B cell (primary cell): ENCODE measurements at regions of chr7 and their contacts with region 1.

Region 1: DNA sequence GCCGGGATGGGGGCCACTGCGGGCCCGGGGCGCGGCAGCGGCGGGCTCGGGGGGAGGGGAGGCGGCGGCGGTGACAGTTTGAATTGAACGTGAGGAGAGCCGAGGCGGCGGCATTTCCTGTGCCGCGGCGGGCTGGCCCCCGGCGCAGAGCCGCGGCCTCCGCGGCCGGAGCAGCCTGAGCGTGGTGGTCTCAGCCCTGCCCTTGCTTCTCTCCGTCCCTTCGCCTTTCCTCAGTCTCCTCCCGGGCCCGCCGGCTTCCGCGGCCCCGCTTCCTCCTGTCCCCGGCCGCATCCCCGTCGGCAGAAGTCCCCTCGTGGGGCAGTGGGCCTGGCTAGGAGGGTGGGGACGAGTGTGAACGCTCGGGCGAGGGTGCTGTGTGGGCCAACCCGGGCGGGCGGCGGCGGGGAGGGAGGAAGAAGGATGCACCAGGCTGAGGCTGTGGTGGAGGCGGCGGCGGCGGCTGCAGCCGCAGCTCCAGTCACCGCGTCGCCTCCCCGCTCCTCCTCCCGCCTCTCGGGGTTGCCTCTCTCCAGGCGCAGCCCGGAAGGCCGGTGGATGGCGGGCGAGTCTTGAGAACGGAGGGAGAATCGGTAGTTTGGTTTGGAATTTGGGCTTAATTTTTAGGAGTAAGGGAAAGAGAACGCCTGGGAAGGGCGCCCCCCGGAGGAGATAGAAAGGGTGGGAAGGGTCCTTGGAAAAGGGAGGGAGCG is 690 bp downstream of the SEPTIN7 start:
- DNase-seq: peak; percentile 90
- ATAC-seq: peak; percentile 24
- H3K4me3 ChIP-seq: peak overlapping the region; percentile 75 to 91 (median 80)
- H3K4me3 Mint-ChIP-seq: peak overlapping the region; percentile 92
- H3K27ac ChIP-seq: peak overlapping the region; percentile 97 to 99
- H3K27ac Mint-ChIP-seq: peak overlapping the region; percentile 100
- H3K4me1 ChIP-seq: peaks cover 21 to 44% of the 10 kb centered on the region in 2 donors
- H3K4me1 Mint-ChIP-seq: peaks cover 55% of the 10 kb centered on the region
- H3K27me3 ChIP-seq: no peaks in the 10 kb centered on the region
- H3K27me3 Mint-ChIP-seq: no peaks in the 10 kb centered on the region
- CTCF ChIP-seq: peak; percentile 28

Region 2: GRCh38 chr7:35450456-35451214 is 350.9 kb before region 1 on chr7:
- CTCF ChIA-PET with region 1: no interaction called
- POLR2A ChIA-PET with region 1: no interaction called
- intact Hi-C with region 1: no loop called
- DNase-seq: no peak
- ATAC-seq: no peak
- H3K4me3 ChIP-seq: no peak overlapping the region
- H3K4me3 Mint-ChIP-seq: no peak overlapping the region
- H3K27ac ChIP-seq: no peak overlapping the region
- H3K27ac Mint-ChIP-seq: no peak overlapping the region
- H3K4me1 ChIP-seq: peaks cover 0 to 3% of the 10 kb centered on the region in 2 donors
- H3K4me1 Mint-ChIP-seq: no peaks in the 10 kb centered on the region
- H3K27me3 ChIP-seq: peaks cover 0 to 23% (median 11%) of the 10 kb centered on the region in 4 experiments
- H3K27me3 Mint-ChIP-seq: peaks cover 47% of the 10 kb centered on the region
- CTCF ChIP-seq: no peak

Region 3: DNA sequence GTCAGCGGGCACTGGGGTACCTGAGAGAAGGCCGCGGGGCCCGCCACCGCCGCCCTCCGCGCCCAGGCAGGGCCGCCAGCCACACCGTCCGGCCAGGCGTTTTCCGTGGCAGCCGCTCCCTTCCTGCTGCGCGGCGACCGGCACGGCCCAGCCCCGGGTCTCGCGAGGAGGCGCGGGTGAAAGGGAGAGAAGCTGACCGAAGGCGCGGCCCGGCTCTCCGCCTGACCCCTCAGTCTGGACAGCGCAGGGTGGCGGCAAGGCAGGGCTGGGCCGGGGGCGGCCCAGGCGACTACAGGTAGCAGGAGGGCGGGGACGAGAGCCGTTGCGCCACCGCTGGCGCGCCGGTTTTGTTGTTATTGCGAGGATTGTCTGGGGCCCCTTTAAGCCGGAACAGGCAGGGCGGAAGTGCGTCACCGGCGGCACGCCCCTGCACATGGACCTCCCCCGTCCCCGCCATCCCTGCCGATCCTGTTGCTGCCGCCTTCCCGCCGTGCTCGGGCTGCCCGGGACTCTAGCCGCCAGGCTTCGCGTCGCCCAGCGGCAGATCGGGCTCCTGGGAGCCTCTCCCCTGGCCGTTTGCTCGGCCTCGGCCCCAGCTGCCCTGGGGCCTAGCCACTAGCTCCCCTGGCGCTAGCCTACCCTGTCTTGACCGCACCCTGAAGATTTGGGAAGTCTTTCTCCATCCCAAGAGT is 106.6 kb before region 1 on chr7 and contains the start of gene HERPUD2:
- CTCF ChIA-PET with region 1: interaction called, 11 read pairs
- POLR2A ChIA-PET with region 1: interaction called, 30 read pairs
- intact Hi-C with region 1: loop called (anchors 1 kb)
- DNase-seq: peak; percentile 94
- ATAC-seq: peak; percentile 91
- H3K4me3 ChIP-seq: peak within 1 kb of the TSS; percentile 78 to 98 (median 94)
- H3K4me3 Mint-ChIP-seq: peak within 1 kb of the TSS; percentile 98
- H3K27ac ChIP-seq: peak within 1 kb of the TSS; percentile 82 to 98
- H3K27ac Mint-ChIP-seq: peak within 1 kb of the TSS; percentile 97
- H3K4me1 ChIP-seq: peaks cover 40 to 44% of the 10 kb centered on the region in 2 donors
- H3K4me1 Mint-ChIP-seq: peaks cover 57% of the 10 kb centered on the region
- H3K27me3 ChIP-seq: no peaks in the 10 kb centered on the region
- H3K27me3 Mint-ChIP-seq: no peaks in the 10 kb centered on the region
- CTCF ChIP-seq: no peak
- total RNA-seq, gene HERPUD2: 54.6 and 58.8 TPM in 2 replicates

Region 4: DNA sequence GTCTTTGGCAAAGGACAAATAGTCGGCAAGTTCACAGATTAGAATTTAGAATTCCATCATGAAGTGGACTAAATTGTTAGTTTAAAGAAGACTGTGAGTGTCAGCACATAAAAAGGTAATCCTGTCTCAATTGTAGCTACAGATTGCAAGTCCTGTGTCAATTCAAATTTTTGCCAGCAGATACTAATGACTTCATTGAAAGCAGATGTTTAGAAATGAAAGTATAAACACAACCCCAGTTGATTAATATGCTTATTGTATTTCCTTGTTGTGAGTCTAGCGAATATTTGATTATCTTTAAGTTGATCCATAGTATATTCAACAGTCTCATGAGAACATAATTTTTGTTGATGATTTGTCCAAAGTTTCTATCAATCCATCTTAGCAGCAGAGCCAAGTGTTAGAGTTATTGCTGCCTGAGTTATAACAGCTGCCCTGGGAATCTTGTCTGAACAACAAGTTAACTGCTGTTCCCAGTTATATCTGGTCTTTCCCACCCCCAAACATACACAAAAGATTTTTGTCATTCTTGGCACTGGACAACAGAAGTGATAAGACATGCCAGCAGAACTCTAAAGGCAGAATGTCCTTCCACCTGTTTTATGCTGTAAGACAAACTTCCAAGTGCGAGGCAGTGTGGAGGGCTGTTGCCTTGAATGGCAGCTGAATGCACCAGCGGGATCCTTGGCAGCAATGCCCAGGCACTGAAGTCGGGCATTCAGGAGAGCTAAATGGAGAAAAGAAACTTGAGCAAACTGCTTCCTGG is 85.3 kb before region 1 on chr7:
- CTCF ChIA-PET with region 1: interaction called, 96 read pairs
- POLR2A ChIA-PET with region 1: interaction called, 3 read pairs
- intact Hi-C with region 1: no loop called
- DNase-seq: no peak
- ATAC-seq: no peak
- H3K4me3 ChIP-seq: no peak overlapping the region
- H3K4me3 Mint-ChIP-seq: no peak overlapping the region
- H3K27ac ChIP-seq: no peak overlapping the region
- H3K27ac Mint-ChIP-seq: peak overlapping the region; percentile 16
- H3K4me1 ChIP-seq: peaks cover 13 to 16% of the 10 kb centered on the region in 2 donors
- H3K4me1 Mint-ChIP-seq: peaks cover 27% of the 10 kb centered on the region
- H3K27me3 ChIP-seq: no peaks in the 10 kb centered on the region
- H3K27me3 Mint-ChIP-seq: no peaks in the 10 kb centered on the region
- CTCF ChIP-seq: no peak

Region 5: DNA sequence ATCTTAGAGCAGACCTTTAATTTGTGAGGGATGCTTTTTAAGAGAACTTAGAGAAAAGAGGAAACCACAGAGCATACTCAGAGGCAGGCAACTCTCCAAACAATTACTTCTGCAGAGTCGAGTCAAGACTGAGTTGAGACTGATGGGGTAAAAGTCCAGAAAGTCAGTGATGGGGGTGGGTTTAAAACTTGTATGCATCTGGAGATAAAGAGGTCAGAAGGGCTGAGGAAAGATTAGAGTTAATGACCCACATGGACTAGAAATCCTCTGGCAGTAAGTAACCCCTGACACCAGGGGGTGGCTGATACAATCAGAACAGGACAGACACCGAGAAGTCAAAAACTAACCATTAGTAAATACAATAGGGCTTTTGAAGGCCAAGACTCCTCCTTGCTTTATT is 43.1 kb before region 1 on chr7:
- CTCF ChIA-PET with region 1: no interaction called
- POLR2A ChIA-PET with region 1: no interaction called
- intact Hi-C with region 1: loop called (anchors 5 kb)
- DNase-seq: peak; percentile 30
- ATAC-seq: no peak
- H3K4me3 ChIP-seq: no peak overlapping the region
- H3K4me3 Mint-ChIP-seq: no peak overlapping the region
- H3K27ac ChIP-seq: no peak overlapping the region
- H3K27ac Mint-ChIP-seq: no peak overlapping the region
- H3K4me1 ChIP-seq: peaks cover 0 to 3% of the 10 kb centered on the region in 2 donors
- H3K4me1 Mint-ChIP-seq: peaks cover 7% of the 10 kb centered on the region
- H3K27me3 ChIP-seq: no peaks in the 10 kb centered on the region
- H3K27me3 Mint-ChIP-seq: no peaks in the 10 kb centered on the region
- CTCF ChIP-seq: no peak

Region 6: GRCh38 chr7:35780070-35780469 is 21.5 kb before region 1 on chr7:
- CTCF ChIA-PET with region 1: no interaction called
- POLR2A ChIA-PET with region 1: no interaction called
- intact Hi-C with region 1: no loop called
- DNase-seq: no peak
- ATAC-seq: no peak
- H3K4me3 ChIP-seq: no peak overlapping the region
- H3K4me3 Mint-ChIP-seq: no peak overlapping the region
- H3K27ac ChIP-seq: no peak overlapping the region
- H3K27ac Mint-ChIP-seq: no peak overlapping the region
- H3K4me1 ChIP-seq: no peaks in the 10 kb centered on the region
- H3K4me1 Mint-ChIP-seq: peaks cover 5% of the 10 kb centered on the region
- H3K27me3 ChIP-seq: no peaks in the 10 kb centered on the region
- H3K27me3 Mint-ChIP-seq: no peaks in the 10 kb centered on the region
- CTCF ChIP-seq: no peak

Region 7: GRCh38 chr7:35854311-35854710 is 52.8 kb after region 1 on chr7:
- CTCF ChIA-PET with region 1: interaction called, 3 read pairs
- POLR2A ChIA-PET with region 1: interaction called, 3 read pairs
- intact Hi-C with region 1: loop called (anchors 10 kb)
- DNase-seq: no peak
- ATAC-seq: no peak
- H3K4me3 ChIP-seq: no peak overlapping the region
- H3K4me3 Mint-ChIP-seq: no peak overlapping the region
- H3K27ac ChIP-seq: no peak overlapping the region
- H3K27ac Mint-ChIP-seq: no peak overlapping the region
- H3K4me1 ChIP-seq: no peaks in the 10 kb centered on the region
- H3K4me1 Mint-ChIP-seq: peaks cover 60% of the 10 kb centered on the region
- H3K27me3 ChIP-seq: no peaks in the 10 kb centered on the region
- H3K27me3 Mint-ChIP-seq: no peaks in the 10 kb centered on the region
- CTCF ChIP-seq: no peak

Region 8: DNA sequence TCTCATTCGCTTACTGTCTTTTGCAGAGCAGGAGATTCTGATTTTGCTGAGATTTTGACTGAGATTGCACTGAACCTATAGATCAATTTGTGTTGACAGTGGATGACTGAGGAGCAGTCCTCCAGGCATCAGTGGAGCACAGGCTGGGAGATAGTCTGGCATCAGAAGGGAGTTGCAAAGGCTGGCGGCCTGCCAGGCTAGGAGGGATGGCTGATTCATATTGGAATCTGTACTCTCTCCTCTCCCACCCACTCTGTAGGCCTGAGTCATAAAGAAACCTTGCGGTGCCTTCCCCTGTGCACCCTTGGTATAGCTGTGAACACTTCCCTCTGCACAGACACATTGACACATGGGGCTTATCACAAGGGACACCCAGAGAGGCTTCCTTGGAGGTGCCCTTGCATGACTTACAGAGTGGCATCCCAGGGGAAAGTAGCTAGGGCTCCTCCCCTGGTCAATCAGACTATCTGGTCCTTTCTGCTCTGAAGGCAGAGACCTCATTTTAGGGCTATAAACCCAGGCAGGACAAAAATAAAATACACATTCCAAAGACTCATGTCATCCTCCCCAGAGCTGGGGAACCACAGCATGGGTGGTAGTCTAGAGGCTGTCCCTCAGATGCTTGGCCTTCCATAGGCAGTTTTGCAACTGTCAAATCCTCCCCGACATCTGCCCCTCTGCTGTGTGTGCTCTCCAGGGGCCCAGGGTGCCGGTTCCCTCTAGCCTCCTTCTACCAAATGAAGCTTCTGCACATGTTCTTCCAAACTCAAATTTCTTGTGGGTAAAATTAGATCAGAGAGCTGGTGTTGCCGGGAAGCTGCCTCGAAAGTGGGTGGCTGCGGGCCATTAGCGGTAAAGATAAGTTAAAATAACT is 314.1 kb after region 1 on chr7:
- CTCF ChIA-PET with region 1: no interaction called
- POLR2A ChIA-PET with region 1: no interaction called
- intact Hi-C with region 1: no loop called
- DNase-seq: no peak
- ATAC-seq: no peak
- H3K4me3 ChIP-seq: no peak overlapping the region
- H3K4me3 Mint-ChIP-seq: no peak overlapping the region
- H3K27ac ChIP-seq: no peak overlapping the region
- H3K27ac Mint-ChIP-seq: no peak overlapping the region
- H3K4me1 ChIP-seq: no peaks in the 10 kb centered on the region
- H3K4me1 Mint-ChIP-seq: no peaks in the 10 kb centered on the region
- H3K27me3 ChIP-seq: peaks cover 0 to 4% (median 0%) of the 10 kb centered on the region in 4 experiments
- H3K27me3 Mint-ChIP-seq: peaks cover 22% of the 10 kb centered on the region
- CTCF ChIP-seq: no peak

Region 9: DNA sequence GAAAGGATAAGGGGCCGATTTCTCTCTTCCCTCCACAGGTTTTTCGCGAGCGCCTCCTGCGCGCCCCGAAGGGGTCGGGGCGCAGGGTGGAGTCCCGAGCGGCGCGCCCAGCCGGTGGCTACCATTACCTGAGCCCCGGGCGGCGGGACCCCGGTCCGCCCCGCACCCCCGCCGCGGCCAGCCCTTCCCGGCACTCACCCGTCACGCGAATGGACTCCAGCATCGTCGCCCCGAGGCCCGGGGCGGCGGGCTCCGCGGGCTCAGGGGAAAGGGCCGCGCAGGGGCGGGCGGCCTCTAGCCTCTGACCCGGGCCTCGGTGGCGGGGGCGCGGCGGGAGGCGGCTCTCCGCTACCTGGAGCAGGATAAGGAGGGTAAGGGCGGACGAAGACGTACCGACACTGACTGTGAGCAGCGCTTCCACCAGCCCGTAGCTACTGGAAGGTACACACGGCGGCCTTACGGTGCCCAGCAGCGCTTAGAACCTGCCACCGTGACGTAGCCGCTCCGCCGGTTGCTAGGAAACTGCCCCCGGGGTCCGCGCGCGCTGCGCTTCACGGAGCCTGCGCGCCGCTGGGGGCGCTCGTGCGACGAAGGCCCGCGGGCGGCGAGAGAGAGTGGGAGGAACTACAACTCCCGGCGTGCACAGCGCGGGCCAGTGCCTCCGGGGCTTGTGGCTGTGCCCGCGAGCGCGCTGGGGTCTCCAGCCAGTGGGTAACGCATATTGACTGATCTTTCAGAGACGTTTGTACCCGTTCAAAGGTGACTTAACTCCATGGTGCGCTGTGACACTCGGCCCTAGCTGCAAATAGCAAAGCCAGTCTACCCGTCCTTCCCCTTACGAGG is 565.4 kb after region 1 on chr7:
- CTCF ChIA-PET with region 1: no interaction called
- POLR2A ChIA-PET with region 1: no interaction called
- intact Hi-C with region 1: loop called (anchors 5 kb)
- DNase-seq: peak; percentile 96
- ATAC-seq: peak; percentile 97
- H3K4me3 ChIP-seq: peak overlapping the region; percentile 58 to 85 (median 65)
- H3K4me3 Mint-ChIP-seq: peak overlapping the region; percentile 97
- H3K27ac ChIP-seq: peak overlapping the region in 1 of 2 donors; percentile 76
- H3K27ac Mint-ChIP-seq: peak overlapping the region; percentile 61
- H3K4me1 ChIP-seq: peaks cover 3 to 8% of the 10 kb centered on the region in 2 donors
- H3K4me1 Mint-ChIP-seq: peaks cover 8% of the 10 kb centered on the region
- H3K27me3 ChIP-seq: peaks cover 0 to 2% (median 1%) of the 10 kb centered on the region in 4 experiments
- H3K27me3 Mint-ChIP-seq: peaks cover 7% of the 10 kb centered on the region
- CTCF ChIP-seq: peak; percentile 86